ENCODE measurements at regions of chr19 and their contacts with region 1.

Region 1: DNA sequence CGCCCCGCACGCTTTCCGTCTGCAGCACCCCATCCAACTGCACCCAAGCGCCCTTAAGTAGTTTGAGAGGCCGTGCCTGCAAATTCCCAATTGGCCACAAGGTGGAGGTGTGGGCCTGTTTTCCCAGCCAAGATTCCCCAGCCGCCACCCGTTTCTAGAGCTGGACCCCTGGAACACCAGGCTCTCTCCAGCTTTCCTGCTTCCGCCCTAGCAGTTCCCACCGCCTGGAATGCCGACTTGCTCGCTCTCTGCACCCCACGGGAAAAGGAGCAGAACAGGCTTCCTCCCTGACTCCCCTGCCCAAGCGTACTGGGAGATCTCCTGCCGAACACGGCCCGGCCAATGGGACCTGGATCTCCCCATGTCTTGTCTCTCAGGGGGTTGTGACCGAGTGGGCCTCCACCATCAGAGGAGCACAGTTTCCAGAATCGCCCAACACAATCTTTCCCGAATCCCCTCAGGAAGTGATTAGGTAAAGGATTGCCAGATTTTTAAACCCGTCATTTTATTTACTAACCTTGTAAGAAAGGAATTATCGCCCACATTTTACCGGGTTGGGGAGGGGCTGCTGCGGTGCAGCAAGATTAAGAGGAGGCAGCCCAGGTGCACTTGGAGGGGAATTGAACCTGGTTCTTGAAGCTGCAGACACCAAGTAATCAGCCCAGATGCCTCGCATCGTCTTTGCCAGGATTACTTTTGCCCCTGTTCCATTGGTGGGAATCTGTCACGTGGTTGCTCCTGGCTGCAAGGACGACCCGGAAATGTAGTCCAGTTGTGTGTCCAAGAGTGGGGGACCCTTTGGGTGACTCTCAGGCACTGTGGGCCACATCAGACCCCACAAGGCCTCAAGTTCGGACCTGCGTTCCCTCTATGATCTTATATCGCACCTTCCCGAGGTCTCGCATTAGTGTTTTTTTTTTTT is 3.5 kb upstream of the NAPSA start:
- DNase-seq: peak; percentile 89 to 95 (median 92)
- H3K4me3 ChIP-seq: peak overlapping the region; percentile 68 to 100 (median 72)
- H3K27ac ChIP-seq: peak overlapping the region; percentile 60 to 76
- H3K4me1 ChIP-seq: no peaks in the 10 kb centered on the region
- H3K27me3 ChIP-seq: no peaks in the 10 kb centered on the region
- CTCF ChIP-seq: peak; percentile 83

Region 2: GRCh38 chr19:50432221-50433028 is 63.5 kb after region 1 on chr19 and contains the start of gene MYBPC2:
- intact Hi-C with region 1: no loop called
- DNase-seq: peak in 4 of 5 donors; percentile 64 to 87 (median 80)
- H3K4me3 ChIP-seq: peak within 1 kb of the TSS; percentile 68 to 82 (median 79)
- H3K27ac ChIP-seq: no peak within 1 kb of the TSS
- H3K4me1 ChIP-seq: peaks cover 0 to 7% (median 3%) of the 10 kb centered on the region in 3 donors
- H3K27me3 ChIP-seq: no peaks in the 10 kb centered on the region
- CTCF ChIP-seq: no peak
- total RNA-seq, gene MYBPC2: 0.98 TPM

Region 3: GRCh38 chr19:50461066-50461875 is 92.4 kb after region 1 on chr19:
- intact Hi-C with region 1: loop called (anchors 10 kb)
- DNase-seq: peak in 4 of 5 donors; percentile 75 to 84 (median 78)
- H3K4me3 ChIP-seq: no peak overlapping the region
- H3K27ac ChIP-seq: no peak overlapping the region
- H3K4me1 ChIP-seq: no peaks in the 10 kb centered on the region
- H3K27me3 ChIP-seq: no peaks in the 10 kb centered on the region
- CTCF ChIP-seq: peak; percentile 87